ENCODE measurements at regions of chr9 and their contacts with region 1.

Region 1: DNA sequence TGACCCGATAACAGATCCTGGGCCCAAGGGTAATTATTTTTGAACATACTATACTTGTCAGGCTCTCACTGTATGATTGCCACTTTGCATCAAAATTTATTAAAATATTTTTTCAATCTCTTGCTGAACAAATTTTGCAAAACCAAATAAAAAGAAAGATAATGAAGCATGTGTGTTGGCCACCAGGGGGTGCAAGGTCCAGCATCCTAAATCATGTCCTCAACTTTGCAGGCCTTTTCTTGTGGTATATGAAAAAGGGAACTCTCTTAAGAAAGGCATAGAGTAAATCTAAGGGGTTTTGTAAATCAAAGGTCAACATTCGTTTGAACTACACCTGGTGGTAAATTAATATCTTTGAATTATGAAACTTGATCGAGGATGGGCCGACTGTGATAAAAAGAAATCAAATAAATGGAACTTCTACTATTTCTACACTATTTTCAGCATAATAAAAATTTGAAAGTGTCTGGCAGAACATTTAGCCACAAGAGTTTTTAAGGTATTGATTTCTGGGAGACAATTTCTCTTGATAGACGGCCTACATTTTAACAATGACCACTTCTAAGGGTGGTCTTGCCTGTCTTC is 676.5 kb downstream of the DMRTA1 start:
- DNase-seq: peak; percentile 31
- ATAC-seq: no peak

Region 2: GRCh38 chr9:23887781-23888180 is 764.6 kb after region 1 on chr9:
- intact Hi-C with region 1: loop called in 1 of 2 experiments (anchors 5 kb)
- DNase-seq: no peak
- ATAC-seq: no peak